IMR-90 (cell line): ENCODE measurements at regions of chr20 and their contacts with region 1.

Region 1: GRCh38 chr20:58236612-58237330 is 8.3 kb upstream of the ANKRD60 start:
- DNase-seq: peak; percentile 61
- ATAC-seq: peak; percentile 90
- H3K4me3 ChIP-seq: peak overlapping the region; percentile 72
- H3K27ac ChIP-seq: no peak overlapping the region; the same call in 1 of the 2 replicates
- H3K4me1 ChIP-seq: peaks cover 7% of the 10 kb centered on the region
- H3K27me3 ChIP-seq: no peaks in the 10 kb centered on the region
- CTCF ChIP-seq: peak; percentile 91
- POLR2A ChIP-seq: peak; percentile 8; the same call in 1 of the 2 replicates
- RAD21 ChIP-seq: peak; percentile 90

Region 2: DNA sequence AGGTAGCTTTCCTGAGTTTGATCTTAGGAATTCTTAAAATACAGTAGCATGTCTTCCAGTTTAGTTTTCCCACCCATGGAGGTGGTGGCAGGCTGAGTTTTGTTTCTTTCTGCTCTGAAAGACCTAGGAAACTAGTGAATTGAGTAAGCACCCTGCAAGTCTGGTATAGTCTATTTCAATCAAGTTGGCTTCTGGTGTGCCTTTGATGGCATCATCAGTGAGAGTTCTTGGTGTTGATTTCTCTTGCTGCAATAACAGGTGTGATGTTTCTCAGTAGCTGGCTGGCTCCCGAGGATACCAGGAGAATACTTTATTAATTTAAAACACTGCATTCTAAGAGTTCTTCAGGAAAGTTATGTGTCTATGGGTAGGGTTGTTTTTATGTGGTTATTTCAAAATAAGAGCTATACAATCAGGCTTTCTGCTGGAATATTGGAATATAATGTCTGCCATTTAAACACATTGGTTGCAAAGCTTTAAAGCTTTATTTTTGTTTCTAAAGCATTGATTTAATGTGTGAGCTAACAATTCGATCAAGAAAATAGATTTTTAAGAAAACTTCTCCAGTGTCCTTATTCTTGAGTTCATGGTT is 171.3 kb after region 1 on chr20:
- CTCF ChIA-PET with region 1: interaction called, 10 read pairs
- POLR2A ChIA-PET with region 1: no interaction called
- dilution Hi-C with region 1: no loop called
- in situ Hi-C with region 1: no loop called
- intact Hi-C with region 1: no loop called
- DNase-seq: no peak
- ATAC-seq: no peak
- H3K4me3 ChIP-seq: no peak overlapping the region
- H3K27ac ChIP-seq: no peak overlapping the region
- H3K4me1 ChIP-seq: peaks cover 5% of the 10 kb centered on the region; the same call in 1 of the 2 replicates
- H3K27me3 ChIP-seq: no peaks in the 10 kb centered on the region
- CTCF ChIP-seq: no peak
- POLR2A ChIP-seq: no peak
- RAD21 ChIP-seq: no peak

Region 3: DNA sequence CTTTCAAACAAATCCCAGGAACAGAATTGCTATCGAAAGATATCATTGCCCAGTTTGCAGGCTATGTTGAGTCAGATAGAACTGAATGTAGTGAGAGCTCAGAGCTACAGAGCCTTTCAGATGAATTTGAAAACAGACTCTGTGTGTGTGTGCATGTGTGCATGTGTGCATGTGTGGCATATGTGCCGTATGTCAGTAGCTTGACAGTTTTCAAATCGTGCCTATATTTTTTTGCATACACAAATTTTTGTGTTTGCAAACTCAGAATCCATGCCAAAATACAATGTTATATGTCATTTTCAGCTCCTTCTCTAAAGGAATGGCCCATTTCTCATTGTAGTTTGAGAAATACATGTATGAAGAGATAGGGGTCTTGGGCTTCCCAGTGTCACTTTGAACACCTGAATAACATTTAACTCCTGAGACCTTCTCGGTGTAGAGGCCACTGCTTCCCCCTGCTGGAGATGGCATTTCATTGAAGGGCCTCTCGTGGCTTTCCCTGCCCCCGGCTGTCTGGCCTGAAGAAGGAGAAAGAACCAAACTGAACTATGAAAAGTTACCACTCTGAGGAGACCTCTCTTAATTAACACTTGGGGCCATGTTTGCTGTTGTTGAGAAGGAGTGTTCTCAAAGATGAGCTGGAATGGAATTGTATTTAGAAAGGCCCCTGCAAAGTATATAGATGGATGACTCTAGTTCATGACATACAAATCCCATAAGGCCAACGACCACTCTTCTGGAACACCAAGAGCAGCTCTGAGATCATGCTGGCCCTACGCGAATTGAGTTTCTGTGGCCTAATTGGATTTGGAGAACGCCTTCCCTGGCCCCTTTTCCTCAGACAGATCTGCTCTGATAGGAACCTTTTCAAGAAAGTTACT is 211.0 kb after region 1 on chr20:
- CTCF ChIA-PET with region 1: interaction called, 3 read pairs
- POLR2A ChIA-PET with region 1: no interaction called
- dilution Hi-C with region 1: no loop called
- in situ Hi-C with region 1: no loop called
- intact Hi-C with region 1: loop called (anchors 1 kb)
- DNase-seq: peak; percentile 58
- ATAC-seq: peak; percentile 90
- H3K4me3 ChIP-seq: no peak overlapping the region
- H3K27ac ChIP-seq: no peak overlapping the region
- H3K4me1 ChIP-seq: 0 out of 2 replicates have a peak, but pooled peaks cover 1% of the 10 kb centered on the region
- H3K27me3 ChIP-seq: no peaks in the 10 kb centered on the region
- CTCF ChIP-seq: peak; percentile 79
- POLR2A ChIP-seq: no peak
- RAD21 ChIP-seq: peak; percentile 85

Region 4: DNA sequence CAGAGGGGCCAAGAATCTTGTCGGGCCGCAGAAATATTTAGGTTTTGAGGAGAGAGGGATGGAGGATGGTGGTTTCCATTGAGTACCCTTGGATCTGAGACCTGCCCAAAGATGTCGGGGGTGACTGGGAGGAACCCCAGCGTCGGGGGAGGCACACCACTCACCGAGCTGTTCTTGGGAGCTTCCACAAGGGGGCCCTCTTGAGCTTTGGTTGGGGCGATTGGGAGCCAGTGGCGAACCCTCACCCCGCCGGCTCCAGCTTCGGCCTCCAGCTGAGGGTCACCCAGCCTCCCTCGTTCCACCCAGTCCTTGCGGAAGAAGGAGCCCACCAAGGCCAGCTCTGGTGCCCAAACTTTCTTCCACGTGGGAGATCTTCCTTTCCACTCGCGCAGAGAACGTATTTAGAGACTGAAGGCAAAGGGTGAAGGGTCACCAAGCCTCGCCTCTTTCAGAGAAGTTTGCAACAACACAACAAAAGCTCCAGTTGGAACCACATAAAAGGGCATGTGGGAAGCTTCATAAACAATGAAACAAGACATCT is 244.8 kb after region 1 on chr20:
- CTCF ChIA-PET with region 1: no interaction called
- POLR2A ChIA-PET with region 1: no interaction called
- dilution Hi-C with region 1: no loop called
- in situ Hi-C with region 1: no loop called
- intact Hi-C with region 1: no loop called
- DNase-seq: no peak
- ATAC-seq: peak; percentile 56
- H3K4me3 ChIP-seq: no peak overlapping the region
- H3K27ac ChIP-seq: no peak overlapping the region
- H3K4me1 ChIP-seq: no peaks in the 10 kb centered on the region
- H3K27me3 ChIP-seq: no peaks in the 10 kb centered on the region
- CTCF ChIP-seq: peak; percentile 55
- POLR2A ChIP-seq: no peak
- RAD21 ChIP-seq: peak; percentile 79

Region 5: DNA sequence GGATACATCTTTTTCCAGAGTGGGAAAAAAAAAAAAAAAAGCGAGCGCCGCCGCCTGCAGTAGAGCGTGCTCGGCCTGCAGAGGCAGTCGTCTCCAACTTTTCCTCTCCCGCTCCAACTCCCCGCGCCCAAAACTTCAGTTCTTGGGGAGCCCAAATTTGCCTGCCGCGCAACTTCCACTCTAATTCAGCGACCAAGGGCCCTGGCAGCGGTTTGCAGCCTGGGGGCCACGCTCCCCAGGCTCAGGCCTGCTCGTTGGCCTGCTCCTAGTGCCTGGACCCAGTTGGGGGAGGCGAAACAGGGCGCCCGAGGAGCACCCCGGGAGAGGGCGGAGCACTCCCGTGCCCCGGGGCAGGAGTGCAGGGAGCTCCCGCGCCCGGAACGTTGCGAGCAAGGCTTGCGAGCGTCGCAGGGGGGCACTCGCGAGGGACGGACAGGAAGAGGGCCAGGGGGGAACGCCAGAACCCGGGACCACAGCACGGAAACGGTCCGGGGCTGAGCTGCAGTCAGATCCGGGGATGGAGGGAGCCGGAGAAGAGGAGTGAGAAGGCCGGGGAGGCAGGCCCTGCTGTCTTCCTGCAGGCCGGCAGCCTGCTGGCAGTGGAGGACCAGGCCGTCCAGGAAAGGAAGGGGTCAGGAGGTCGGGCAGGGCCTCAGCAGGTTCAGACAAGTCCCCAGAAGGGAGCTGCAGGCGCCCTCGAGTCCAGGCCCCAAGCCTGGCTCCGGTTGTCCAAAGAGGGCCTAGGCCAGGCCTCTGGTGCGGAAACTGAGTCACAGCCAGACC is 414.2 kb after region 1 on chr20 and contains the start of gene STX16:
- CTCF ChIA-PET with region 1: interaction called, 8 read pairs
- POLR2A ChIA-PET with region 1: no interaction called
- dilution Hi-C with region 1: loop called (anchors 25 kb)
- in situ Hi-C with region 1: loop called (anchors 10 kb)
- intact Hi-C with region 1: loop called (anchors 1 kb)
- DNase-seq: peak; percentile 91
- ATAC-seq: peak; percentile 89
- H3K4me3 ChIP-seq: peak within 1 kb of the TSS; percentile 78
- H3K27ac ChIP-seq: peak within 1 kb of the TSS; percentile 90
- H3K4me1 ChIP-seq: peaks cover 8% of the 10 kb centered on the region
- H3K27me3 ChIP-seq: no peaks in the 10 kb centered on the region
- CTCF ChIP-seq: peak; percentile 53
- POLR2A ChIP-seq: peak; percentile 72; the same call in 1 of the 2 replicates
- RAD21 ChIP-seq: peak; percentile 48
- total RNA-seq, gene STX16: 26.9 and 29.4 TPM in 2 replicates

Region 6: GRCh38 chr20:58850693-58851174 is 614.0 kb after region 1 on chr20 and contains the start of gene GNAS-AS1:
- CTCF ChIA-PET with region 1: no interaction called
- POLR2A ChIA-PET with region 1: no interaction called
- dilution Hi-C with region 1: no loop called
- in situ Hi-C with region 1: no loop called
- intact Hi-C with region 1: loop called (anchors 2 kb)
- DNase-seq: peak; percentile 87
- ATAC-seq: peak; percentile 89
- H3K4me3 ChIP-seq: peak within 1 kb of the TSS; percentile 88
- H3K27ac ChIP-seq: peak within 1 kb of the TSS; percentile 7; the same call in 1 of the 2 replicates
- H3K4me1 ChIP-seq: peaks cover 2% of the 10 kb centered on the region; the same call in 1 of the 2 replicates
- H3K27me3 ChIP-seq: peaks cover 36% of the 10 kb centered on the region
- CTCF ChIP-seq: no peak
- POLR2A ChIP-seq: no peak
- RAD21 ChIP-seq: no peak
- total RNA-seq, gene GNAS-AS1: 0.54 and 0.83 TPM in 2 replicates

Region 7: GRCh38 chr20:59042796-59043660 is 806.3 kb after region 1 on chr20:
- CTCF ChIA-PET with region 1: no interaction called
- POLR2A ChIA-PET with region 1: no interaction called
- dilution Hi-C with region 1: no loop called
- in situ Hi-C with region 1: loop called (anchors 25 kb)
- intact Hi-C with region 1: loop called (anchors 10 kb)
- DNase-seq: peak; percentile 85
- ATAC-seq: peak; percentile 99
- H3K4me3 ChIP-seq: peak overlapping the region; percentile 91
- H3K27ac ChIP-seq: peak overlapping the region; percentile 90
- H3K4me1 ChIP-seq: peaks cover 8% of the 10 kb centered on the region
- H3K27me3 ChIP-seq: no peaks in the 10 kb centered on the region
- CTCF ChIP-seq: 0 out of 2 replicates have a peak, but pooled peaks have one; percentile 7
- POLR2A ChIP-seq: no peak
- RAD21 ChIP-seq: no peak